ENCODE measurements at regions of chr18 and their contacts with region 1.

Region 1: DNA sequence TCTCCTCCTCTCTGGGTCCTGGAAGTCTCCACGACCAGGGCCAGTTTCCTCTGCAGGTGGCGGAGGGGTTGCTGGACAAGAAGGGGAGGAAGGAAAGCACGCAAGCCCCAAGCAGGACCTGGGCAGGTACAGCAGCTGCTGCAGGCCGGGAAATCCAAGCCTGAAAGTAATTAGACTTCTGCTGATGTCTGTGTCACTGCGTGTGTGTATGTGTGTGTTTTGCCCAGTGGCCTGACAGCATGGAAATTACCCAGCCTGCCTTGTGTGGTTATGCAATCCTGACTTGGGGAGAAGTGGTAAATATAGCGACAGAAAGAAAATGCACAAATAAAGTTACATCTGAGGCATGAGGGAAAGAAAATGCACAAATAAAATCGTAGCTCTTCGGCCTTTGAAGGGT is 121.8 kb upstream of the ZBTB14 start:
- DNase-seq: peak in 40 of 42 donors; percentile 20 to 82 (median 60)

Region 2: GRCh38 chr18:5295981-5296705 is 121.2 kb before region 1 on chr18:
- intact Hi-C with region 1: loop called (anchors 5 kb)
- DNase-seq: peak; percentile 81 to 97 (median 92)

Region 3: DNA sequence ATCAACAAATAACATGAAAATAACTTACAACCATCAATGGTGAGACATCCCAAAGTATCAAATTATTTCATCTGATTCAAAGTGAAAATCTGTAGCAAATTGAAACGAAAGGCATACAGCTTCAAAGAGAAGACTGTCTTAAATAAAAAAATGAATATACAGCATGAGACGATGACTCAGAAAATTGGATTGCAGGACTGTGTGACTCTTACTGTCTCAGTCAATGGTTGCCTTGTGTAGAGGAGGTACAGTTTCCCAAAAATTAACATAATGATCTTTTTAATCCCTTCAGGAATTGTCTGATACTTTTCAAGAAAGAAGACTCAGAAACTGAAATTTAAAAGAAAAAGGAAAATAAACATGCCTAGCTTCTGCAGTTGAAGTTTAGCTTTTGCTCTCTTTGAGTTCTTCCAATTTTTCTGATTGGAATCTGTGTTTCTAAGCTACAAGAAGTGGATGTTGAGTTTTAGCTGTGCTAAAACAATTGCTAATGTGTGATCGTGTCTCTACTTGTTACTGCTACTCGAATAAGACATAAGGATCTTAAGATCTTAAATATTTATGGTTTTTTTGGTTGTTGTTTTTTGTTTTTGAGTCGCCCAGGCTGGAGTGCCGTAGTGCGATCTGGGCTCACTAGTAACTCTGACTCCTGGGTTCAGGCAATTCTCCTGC is 167.5 kb after region 1 on chr18:
- intact Hi-C with region 1: no loop called
- DNase-seq: no peak

Measured in head of caudate nucleus (tissue), 42 donors.